ENCODE measurements at regions of chrX and their contacts with region 1.

Region 1: DNA sequence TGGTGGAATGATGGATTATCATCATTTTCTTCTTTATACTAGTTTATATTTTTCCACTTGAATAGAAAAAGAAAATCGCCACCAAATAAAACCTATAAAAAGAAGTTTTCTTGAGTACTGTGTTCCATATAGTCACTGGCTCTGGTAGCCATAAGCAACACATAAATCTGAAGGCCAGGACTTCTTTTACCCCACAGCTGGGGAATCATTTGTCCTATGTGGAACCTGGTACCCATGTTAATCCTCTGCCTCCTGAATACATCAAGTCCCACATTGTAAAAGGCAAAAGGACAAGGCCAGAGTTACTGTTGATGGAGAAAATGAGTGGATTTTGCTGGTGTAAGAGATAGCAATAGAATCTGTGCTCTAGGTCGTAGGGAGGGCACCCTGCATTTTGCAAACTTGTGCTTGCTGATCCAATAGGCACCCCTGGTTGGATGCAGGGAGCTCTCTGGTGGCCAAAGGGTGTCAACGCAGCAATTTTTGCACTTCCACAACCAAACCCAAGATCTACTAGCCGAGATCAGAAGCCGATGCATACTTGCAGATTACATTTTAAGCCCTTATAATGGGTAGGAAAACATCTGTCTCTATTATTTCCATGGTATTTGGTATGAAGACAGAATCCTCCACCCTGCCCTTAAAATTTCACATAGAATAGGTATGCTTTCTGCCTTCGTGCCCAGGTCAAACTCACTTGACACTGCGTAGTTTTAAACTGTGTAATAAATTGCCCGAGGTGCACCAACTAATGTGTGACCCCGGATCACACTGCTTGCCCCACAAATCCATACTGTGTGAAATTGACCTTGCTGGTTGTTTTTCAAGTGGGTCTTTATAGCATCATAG is 146.2 kb upstream of the SCML1 start:
- DNase-seq: peak; percentile 49
- ATAC-seq: peak; percentile 84
- H3K4me3 ChIP-seq: no peak overlapping the region
- H3K27ac ChIP-seq: no peak overlapping the region
- H3K4me1 ChIP-seq: peaks cover 0 to 8% of the 10 kb centered on the region in 2 experiments; a peak in 2 of 4 replicates
- H3K27me3 ChIP-seq: no peaks in the 10 kb centered on the region
- CTCF ChIP-seq: peak; percentile 59 to 65 (median 63); a peak in 5 of 6 replicates
- POLR2A ChIP-seq: no peak
- RAD21 ChIP-seq: peak; percentile 85

Region 2: DNA sequence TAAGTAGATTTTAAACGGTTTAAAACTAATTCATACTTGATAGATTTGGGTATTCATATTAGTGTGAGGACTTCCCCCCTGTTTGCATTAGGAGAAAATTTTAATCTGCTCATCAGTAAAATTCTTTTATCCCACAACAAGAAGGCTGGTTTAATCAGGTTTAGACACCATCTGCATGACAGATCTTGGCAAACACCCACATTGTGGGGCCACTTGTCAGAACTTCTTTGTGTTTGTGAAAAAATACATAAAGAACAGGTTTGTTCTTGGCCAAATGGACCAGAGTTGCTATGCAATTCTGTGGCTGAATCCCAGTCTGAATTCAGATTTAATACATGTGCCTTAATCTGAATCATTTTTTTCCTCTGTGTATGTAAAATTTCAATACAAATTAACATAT is 523.6 kb before region 1 on chrX:
- CTCF ChIA-PET with region 1: no interaction called
- POLR2A ChIA-PET with region 1: no interaction called
- RAD21 ChIA-PET with region 1: no interaction called
- intact Hi-C with region 1: no loop called
- DNase-seq: no peak
- ATAC-seq: no peak
- H3K4me3 ChIP-seq: no peak overlapping the region
- H3K27ac ChIP-seq: no peak overlapping the region
- H3K4me1 ChIP-seq: no peaks in the 10 kb centered on the region
- H3K27me3 ChIP-seq: no peaks in the 10 kb centered on the region
- CTCF ChIP-seq: no peak
- POLR2A ChIP-seq: no peak
- RAD21 ChIP-seq: no peak

Region 3: DNA sequence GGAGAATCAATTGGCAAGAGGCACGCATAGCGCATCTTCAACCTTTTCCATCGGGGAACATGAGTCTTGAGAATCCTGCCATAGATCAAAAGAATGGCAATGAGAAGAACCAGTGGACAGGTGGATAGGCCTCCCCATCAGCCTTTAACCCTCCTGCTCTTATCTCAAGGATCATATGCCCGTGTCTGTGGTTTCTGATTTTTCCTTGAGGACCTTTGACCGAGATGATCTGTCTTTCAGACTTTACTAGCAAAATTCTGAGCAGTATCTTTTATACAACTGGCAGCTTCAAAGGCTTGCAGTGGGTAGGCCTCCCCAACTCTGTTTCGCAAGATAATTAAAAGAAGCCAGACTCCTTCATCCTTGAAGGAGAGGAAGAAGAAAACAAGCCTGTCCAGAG is 470.3 kb before region 1 on chrX:
- CTCF ChIA-PET with region 1: no interaction called
- POLR2A ChIA-PET with region 1: no interaction called
- RAD21 ChIA-PET with region 1: no interaction called
- intact Hi-C with region 1: loop called (anchors 2 kb)
- DNase-seq: no peak
- ATAC-seq: no peak
- H3K4me3 ChIP-seq: no peak overlapping the region
- H3K27ac ChIP-seq: no peak overlapping the region
- H3K4me1 ChIP-seq: no peaks in the 10 kb centered on the region
- H3K27me3 ChIP-seq: no peaks in the 10 kb centered on the region
- CTCF ChIP-seq: no peak
- POLR2A ChIP-seq: no peak
- RAD21 ChIP-seq: no peak

Region 4: DNA sequence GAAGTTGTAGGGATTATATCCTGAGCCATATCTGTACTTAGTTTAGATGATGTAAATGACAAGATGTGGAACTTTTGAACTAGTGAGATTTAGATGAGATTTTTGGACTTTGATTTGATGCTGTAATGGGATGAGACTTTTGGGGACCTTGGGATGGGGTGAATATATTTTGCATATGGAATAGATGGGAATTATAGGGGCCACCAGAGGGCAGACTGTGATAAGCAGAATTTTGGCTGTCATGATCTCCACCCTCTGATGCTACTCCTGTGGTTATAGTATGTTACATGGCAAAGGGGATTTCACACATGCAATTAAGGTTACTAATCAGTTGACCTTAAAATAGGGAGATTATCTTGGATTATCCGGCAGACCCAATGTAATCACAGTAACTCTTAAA is 430.1 kb before region 1 on chrX:
- CTCF ChIA-PET with region 1: no interaction called
- POLR2A ChIA-PET with region 1: no interaction called
- RAD21 ChIA-PET with region 1: no interaction called
- intact Hi-C with region 1: loop called (anchors 2 kb)
- DNase-seq: no peak
- ATAC-seq: no peak
- H3K4me3 ChIP-seq: no peak overlapping the region
- H3K27ac ChIP-seq: no peak overlapping the region
- H3K4me1 ChIP-seq: no peaks in the 10 kb centered on the region
- H3K27me3 ChIP-seq: no peaks in the 10 kb centered on the region
- CTCF ChIP-seq: peak; percentile 20 to 35 (median 33); a peak in 5 of 6 replicates
- POLR2A ChIP-seq: no peak
- RAD21 ChIP-seq: peak; percentile 60

Region 5: GRCh38 chrX:17242470-17242869 is 348.6 kb before region 1 on chrX:
- CTCF ChIA-PET with region 1: interaction called, 5 read pairs
- POLR2A ChIA-PET with region 1: no interaction called
- RAD21 ChIA-PET with region 1: no interaction called
- intact Hi-C with region 1: loop called (anchors 1 kb)
- DNase-seq: peak; percentile 34
- ATAC-seq: peak; percentile 79
- H3K4me3 ChIP-seq: no peak overlapping the region
- H3K27ac ChIP-seq: no peak overlapping the region
- H3K4me1 ChIP-seq: no peaks in the 10 kb centered on the region
- H3K27me3 ChIP-seq: no peaks in the 10 kb centered on the region
- CTCF ChIP-seq: peak; percentile 61 to 73 (median 67)
- POLR2A ChIP-seq: no peak
- RAD21 ChIP-seq: peak; percentile 74

Region 6: GRCh38 chrX:17535229-17535628 is 55.9 kb before region 1 on chrX:
- CTCF ChIA-PET with region 1: no interaction called
- POLR2A ChIA-PET with region 1: no interaction called
- RAD21 ChIA-PET with region 1: no interaction called
- intact Hi-C with region 1: loop called (anchors 1 kb)
- DNase-seq: peak; percentile 16
- ATAC-seq: peak; percentile 72
- H3K4me3 ChIP-seq: no peak overlapping the region
- H3K27ac ChIP-seq: no peak overlapping the region
- H3K4me1 ChIP-seq: no peaks in the 10 kb centered on the region
- H3K27me3 ChIP-seq: no peaks in the 10 kb centered on the region
- CTCF ChIP-seq: peak; percentile 39 to 65 (median 59); a peak in 5 of 6 replicates
- POLR2A ChIP-seq: no peak
- RAD21 ChIP-seq: peak; percentile 68

Region 7: DNA sequence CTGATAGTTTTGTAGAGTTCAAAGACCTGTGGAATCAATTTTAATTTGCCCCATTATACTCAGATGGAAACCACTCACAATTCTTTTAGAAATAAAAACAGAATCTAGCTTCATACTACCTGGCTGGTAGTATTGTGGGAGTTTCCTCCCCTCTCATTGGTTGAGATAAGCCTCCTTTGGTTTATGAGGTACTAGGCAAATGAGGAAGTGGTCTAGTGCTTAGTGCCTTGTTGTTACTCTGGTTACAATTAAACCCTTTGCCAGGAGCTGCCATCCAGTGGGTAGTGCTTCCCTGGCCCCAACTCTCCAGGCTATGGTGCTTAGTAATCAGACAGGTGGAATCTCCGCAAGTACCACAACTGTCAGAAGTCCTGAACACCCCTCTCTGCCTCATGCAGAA is 952.6 kb after region 1 on chrX:
- CTCF ChIA-PET with region 1: no interaction called
- POLR2A ChIA-PET with region 1: no interaction called
- RAD21 ChIA-PET with region 1: no interaction called
- intact Hi-C with region 1: no loop called
- DNase-seq: no peak
- ATAC-seq: no peak
- H3K4me3 ChIP-seq: no peak overlapping the region
- H3K27ac ChIP-seq: no peak overlapping the region
- H3K4me1 ChIP-seq: no peaks in the 10 kb centered on the region
- H3K27me3 ChIP-seq: no peaks in the 10 kb centered on the region
- CTCF ChIP-seq: no peak
- POLR2A ChIP-seq: no peak
- RAD21 ChIP-seq: no peak

Measured in HCT116 (cell line).